Posterior cingulate gyrus (tissue), 11 donors: ENCODE measurements at regions of chr5 and their contacts with region 1.

Region 1: DNA sequence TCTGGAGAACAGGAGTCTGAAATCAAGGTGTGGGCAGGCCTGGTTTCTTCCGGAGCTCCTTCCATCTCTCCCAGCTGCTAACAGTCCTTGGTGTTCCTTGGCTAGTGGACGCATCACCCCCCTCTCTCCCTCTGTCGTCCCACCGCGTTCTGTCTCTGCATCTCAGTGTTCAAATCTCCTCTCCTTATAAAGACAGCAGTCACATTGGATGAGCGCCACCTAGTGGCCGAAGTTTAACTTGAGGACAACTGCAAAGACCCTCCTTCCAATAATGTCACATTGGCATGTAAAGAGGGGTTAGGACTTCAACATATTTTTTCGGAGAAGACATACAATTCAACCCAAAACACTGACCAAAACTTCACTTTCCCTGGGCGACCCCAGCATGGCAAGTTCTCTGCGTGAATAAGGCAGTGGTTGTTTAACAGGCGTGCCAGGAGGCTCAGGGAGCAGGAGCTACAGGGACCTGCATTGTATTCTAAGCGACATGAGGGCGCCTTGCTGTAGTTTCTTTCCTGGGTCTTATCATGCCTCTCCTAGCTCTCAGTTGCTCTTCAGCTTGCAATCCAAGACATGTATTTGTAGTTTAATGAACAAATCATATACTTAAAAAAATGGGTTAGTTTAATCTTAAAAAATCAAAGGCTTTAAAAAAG is 27.9 kb upstream of the BASP1 start:
- DNase-seq: peak in 9 of 10 donors; percentile 52 to 92 (median 71)

Region 2: GRCh38 chr5:16489322-16489791 is 700.2 kb before region 1 on chr5:
- intact Hi-C with region 1: loop called (anchors 10 kb)
- DNase-seq: no peak

Region 3: GRCh38 chr5:16679863-16680262 is 509.6 kb before region 1 on chr5:
- intact Hi-C with region 1: loop called (anchors 10 kb)
- DNase-seq: peak in 2 of 10 donors; percentile 41 to 85

Region 4: GRCh38 chr5:16791036-16791705 is 398.3 kb before region 1 on chr5:
- intact Hi-C with region 1: loop called (anchors 1 kb)
- DNase-seq: peak in 2 of 10 donors; percentile 24 to 33